PC-3 (cell line): ENCODE measurements at regions of chr16 and their contacts with region 1.

Region 1: DNA sequence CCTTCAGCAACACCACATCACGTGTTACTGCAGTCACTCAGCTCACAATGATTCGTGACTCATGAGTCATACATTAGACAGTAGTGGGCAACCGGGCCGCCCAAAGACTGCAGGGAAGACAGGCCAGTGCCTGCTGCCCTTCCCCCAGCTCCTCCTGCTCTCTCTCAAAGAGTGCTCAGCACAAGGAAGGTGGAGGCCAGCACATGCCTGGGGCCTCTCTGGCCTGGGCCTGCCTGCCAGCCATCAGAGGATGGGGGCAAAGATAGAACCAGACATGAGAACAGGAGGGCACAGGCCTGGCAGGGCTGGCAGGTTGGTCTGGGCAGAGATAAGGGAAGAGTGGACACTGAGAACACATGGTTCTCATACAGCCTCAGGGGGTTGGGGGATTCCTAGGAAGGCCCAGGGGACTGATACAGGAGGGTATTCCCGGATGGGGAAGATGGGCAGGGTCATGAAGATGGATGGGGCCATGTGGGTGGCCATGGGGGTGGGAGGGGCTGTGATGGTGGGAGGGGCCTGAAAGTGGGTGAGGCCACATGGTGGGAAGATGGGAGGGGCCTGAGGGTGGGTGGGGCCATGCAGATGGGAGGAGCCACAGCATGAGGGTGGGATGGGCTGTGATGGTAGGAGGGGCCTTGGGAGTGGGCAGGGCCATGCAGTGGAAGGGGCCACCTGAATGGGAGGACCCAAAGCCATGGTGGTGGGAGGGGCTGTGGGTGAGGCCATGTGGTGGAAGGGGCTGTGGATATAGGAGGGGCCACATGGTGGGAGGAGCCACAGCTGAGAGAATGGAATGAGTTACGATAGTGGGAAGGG is 29.0 kb downstream of the KATNB1 start:
- DNase-seq: peak; percentile 82
- ATAC-seq: peak; percentile 94
- H3K4me3 ChIP-seq: no peak overlapping the region
- H3K27ac ChIP-seq: peak overlapping the region; percentile 87
- H3K4me1 ChIP-seq: peaks cover 8% of the 10 kb centered on the region
- H3K27me3 ChIP-seq: no peaks in the 10 kb centered on the region
- CTCF ChIP-seq: no peak

Region 2: GRCh38 chr16:57810197-57811031 is 45.9 kb after region 1 on chr16:
- CTCF ChIA-PET with region 1: no interaction called
- POLR2A ChIA-PET with region 1: no interaction called
- intact Hi-C with region 1: loop called (anchors 5 kb)
- DNase-seq: peak; percentile 90
- ATAC-seq: peak; percentile 75
- H3K4me3 ChIP-seq: no peak overlapping the region; the same call in 1 of the 2 replicates
- H3K27ac ChIP-seq: peak overlapping the region; percentile 53
- H3K4me1 ChIP-seq: peaks cover 53% of the 10 kb centered on the region
- H3K27me3 ChIP-seq: no peaks in the 10 kb centered on the region
- CTCF ChIP-seq: no peak